Activated CD4-positive, alpha-beta T cell treated with anti-CD3 and anti-CD28 coated beads for 36 hours (primary cell): ENCODE measurements at regions of chr5 and their contacts with region 1.

Region 1: GRCh38 chr5:141878711-141879425 is 658 bp upstream of the PCDH1 start:
- DNase-seq: peak; percentile 93
- ATAC-seq: peak; percentile 90
- H3K4me3 Mint-ChIP-seq: peak overlapping the region; percentile 59
- H3K27ac Mint-ChIP-seq: no peak overlapping the region
- H3K4me1 Mint-ChIP-seq: peaks cover 19% of the 10 kb centered on the region
- H3K27me3 Mint-ChIP-seq: peaks cover 65% of the 10 kb centered on the region

Region 2: GRCh38 chr5:141664732-141665461 is 214.0 kb before region 1 on chr5:
- CTCF ChIA-PET with region 1: interaction called, 34 read pairs
- POLR2A ChIA-PET with region 1: no interaction called
- intact Hi-C with region 1: loop called (anchors 1 kb)
- DNase-seq: peak; percentile 86
- ATAC-seq: peak; percentile 97
- H3K4me3 Mint-ChIP-seq: no peak overlapping the region
- H3K27ac Mint-ChIP-seq: no peak overlapping the region
- H3K4me1 Mint-ChIP-seq: peaks cover 4% of the 10 kb centered on the region
- H3K27me3 Mint-ChIP-seq: no peaks in the 10 kb centered on the region

Region 3: DNA sequence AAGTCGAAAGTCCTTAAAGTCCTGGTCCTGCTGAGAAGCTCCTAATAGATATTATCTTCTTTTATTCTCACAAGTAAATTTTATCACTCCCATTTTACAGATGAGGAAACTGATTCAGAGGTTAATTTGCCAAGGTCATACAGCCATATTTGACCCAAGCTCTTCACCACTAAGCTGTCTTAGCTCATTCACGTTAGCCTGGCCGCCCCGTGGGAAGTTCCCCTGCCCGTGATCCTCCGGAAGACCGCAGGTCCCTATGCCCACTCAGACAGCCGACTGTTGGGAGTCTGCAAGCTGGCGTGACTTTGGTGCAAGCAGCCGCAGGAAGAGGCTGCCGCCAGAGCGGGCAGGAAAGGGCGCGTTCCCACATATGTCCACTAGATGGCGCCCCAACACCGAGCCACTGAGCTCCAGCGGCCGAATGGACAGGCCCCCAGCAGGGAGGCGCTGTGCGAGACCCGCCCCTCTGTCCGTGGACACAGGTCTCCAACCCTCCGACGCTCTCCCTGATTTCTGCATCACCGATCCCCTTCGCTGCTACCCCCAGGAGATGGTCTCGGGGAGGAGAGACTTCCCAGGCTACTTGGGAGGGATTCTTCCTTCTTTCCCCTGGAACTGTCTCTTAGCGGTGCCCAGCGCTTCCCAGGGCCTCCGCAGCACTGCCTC is 186.9 kb before region 1 on chr5:
- CTCF ChIA-PET with region 1: interaction called, 114 read pairs
- POLR2A ChIA-PET with region 1: interaction called, 3 read pairs
- intact Hi-C with region 1: loop called (anchors 1 kb)
- DNase-seq: peak; percentile 93
- ATAC-seq: peak; percentile 71
- H3K4me3 Mint-ChIP-seq: peak overlapping the region; percentile 64
- H3K27ac Mint-ChIP-seq: peak overlapping the region; percentile 55
- H3K4me1 Mint-ChIP-seq: peaks cover 25% of the 10 kb centered on the region
- H3K27me3 Mint-ChIP-seq: peaks cover 4% of the 10 kb centered on the region

Region 4: DNA sequence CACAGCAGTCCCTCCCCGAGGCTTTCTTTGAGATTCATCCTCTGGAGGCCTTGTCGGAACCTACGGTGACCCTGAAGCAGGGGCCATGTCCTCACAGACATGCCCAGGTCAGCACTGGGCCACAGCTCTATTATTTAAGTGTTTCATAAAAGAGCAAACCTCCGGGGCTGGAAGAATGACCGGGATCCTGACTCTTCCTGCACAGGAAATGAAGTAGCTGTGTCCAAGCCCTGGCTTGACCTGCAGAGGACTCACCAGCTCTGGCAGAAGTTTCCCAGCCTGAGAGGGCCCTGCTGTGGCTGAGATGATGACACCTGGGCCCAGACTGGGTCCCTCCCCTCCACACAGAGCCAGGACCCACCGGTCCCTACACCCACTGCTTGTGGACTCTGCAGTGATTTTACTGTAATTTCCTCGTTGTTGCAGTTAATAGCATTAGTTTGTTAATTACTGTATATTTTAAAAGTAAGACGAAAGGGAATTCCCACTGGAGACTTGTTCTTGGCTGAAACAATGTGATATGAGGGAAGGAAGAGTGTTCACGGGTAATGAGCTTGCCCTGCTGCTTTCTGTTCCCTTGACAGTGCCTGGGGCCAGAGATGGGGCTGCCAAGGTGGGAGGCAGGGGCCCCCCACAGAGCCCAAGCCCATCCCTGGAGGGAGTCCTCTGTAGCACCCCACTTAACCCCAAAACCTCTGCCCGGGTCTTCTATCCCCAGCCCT is 72.8 kb before region 1 on chr5:
- CTCF ChIA-PET with region 1: interaction called, 20 read pairs
- POLR2A ChIA-PET with region 1: no interaction called
- intact Hi-C with region 1: loop called in 1 of 2 experiments (anchors 2 kb)
- DNase-seq: no peak
- ATAC-seq: no peak
- H3K4me3 Mint-ChIP-seq: no peak overlapping the region
- H3K27ac Mint-ChIP-seq: no peak overlapping the region
- H3K4me1 Mint-ChIP-seq: no peaks in the 10 kb centered on the region
- H3K27me3 Mint-ChIP-seq: peaks cover 43% of the 10 kb centered on the region

Region 5: DNA sequence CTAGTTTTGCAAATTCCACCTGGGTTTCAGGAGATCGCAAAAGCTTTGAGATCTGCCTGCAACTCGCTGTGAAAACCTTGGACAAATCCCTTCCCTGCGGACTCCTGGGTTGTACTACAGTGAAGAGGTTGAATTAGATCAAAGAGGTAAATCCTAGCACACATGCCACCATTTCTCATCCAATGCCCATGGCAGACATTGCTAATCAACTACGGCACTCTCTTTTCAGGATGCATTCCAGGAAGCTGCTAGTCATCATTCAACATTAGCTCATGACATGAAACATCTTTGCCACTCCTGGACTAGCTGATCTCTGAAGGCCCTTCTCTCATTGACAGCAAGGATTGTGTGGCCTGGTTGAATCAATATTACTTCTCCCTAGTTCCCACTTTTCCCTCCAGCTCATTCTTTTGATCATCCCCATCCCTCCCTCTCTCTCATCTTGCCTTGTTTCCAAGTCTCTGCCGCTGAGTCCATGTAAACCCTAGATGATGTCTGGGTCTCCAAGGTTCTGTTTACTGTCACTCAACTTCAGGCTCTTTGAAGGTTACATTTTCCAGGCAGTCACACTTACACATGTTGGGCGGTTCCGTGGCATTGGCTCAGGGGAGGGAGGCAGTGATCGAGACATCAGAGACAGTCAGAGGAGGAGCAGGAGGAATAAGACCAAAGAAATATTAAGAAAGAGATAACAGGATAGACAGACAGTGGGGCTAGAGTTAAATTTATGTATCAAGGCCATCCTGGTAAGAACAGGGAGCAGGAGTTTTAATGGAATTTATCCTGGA is 46.5 kb before region 1 on chr5:
- CTCF ChIA-PET with region 1: interaction called, 11 read pairs
- POLR2A ChIA-PET with region 1: no interaction called
- intact Hi-C with region 1: no loop called
- DNase-seq: no peak
- ATAC-seq: no peak
- H3K4me3 Mint-ChIP-seq: no peak overlapping the region
- H3K27ac Mint-ChIP-seq: no peak overlapping the region
- H3K4me1 Mint-ChIP-seq: peaks cover 9% of the 10 kb centered on the region
- H3K27me3 Mint-ChIP-seq: peaks cover 2% of the 10 kb centered on the region

Region 6: GRCh38 chr5:141889282-141889871 is 10.5 kb after region 1 on chr5:
- CTCF ChIA-PET with region 1: interaction called, 33 read pairs
- POLR2A ChIA-PET with region 1: interaction called, 3 read pairs
- intact Hi-C with region 1: no loop called
- DNase-seq: no peak
- ATAC-seq: no peak
- H3K4me3 Mint-ChIP-seq: no peak overlapping the region
- H3K27ac Mint-ChIP-seq: no peak overlapping the region
- H3K4me1 Mint-ChIP-seq: no peaks in the 10 kb centered on the region
- H3K27me3 Mint-ChIP-seq: peaks cover 27% of the 10 kb centered on the region

Region 7: GRCh38 chr5:141960449-141961202 is 81.8 kb after region 1 on chr5:
- CTCF ChIA-PET with region 1: interaction called, 75 read pairs
- POLR2A ChIA-PET with region 1: no interaction called
- intact Hi-C with region 1: loop called (anchors 1 to 5 kb)
- DNase-seq: peak; percentile 95
- ATAC-seq: peak; percentile 88
- H3K4me3 Mint-ChIP-seq: peak overlapping the region; percentile 10
- H3K27ac Mint-ChIP-seq: peak overlapping the region; percentile 82
- H3K4me1 Mint-ChIP-seq: peaks cover 38% of the 10 kb centered on the region
- H3K27me3 Mint-ChIP-seq: no peaks in the 10 kb centered on the region